Activated CD4-positive, alpha-beta T cell treated with anti-CD3 and anti-CD28 coated beads for 36 hours (primary cell): ENCODE measurements at regions of chr12 and their contacts with region 1.

Region 1: GRCh38 chr12:3947781-3948180 is 74.6 kb upstream of the PARP11 start:
- DNase-seq: no peak
- ATAC-seq: peak; percentile 52
- H3K4me3 Mint-ChIP-seq: peak overlapping the region; percentile 25
- H3K27ac Mint-ChIP-seq: peak overlapping the region; percentile 84
- H3K4me1 Mint-ChIP-seq: peaks cover 60% of the 10 kb centered on the region
- H3K27me3 Mint-ChIP-seq: no peaks in the 10 kb centered on the region

Region 2: GRCh38 chr12:3905664-3906063 is 42.1 kb before region 1 on chr12:
- CTCF ChIA-PET with region 1: no interaction called
- POLR2A ChIA-PET with region 1: no interaction called
- intact Hi-C with region 1: loop called in 1 of 2 experiments (anchors 5 kb)
- DNase-seq: peak; percentile 25
- ATAC-seq: peak; percentile 66
- H3K4me3 Mint-ChIP-seq: peak overlapping the region; percentile 66
- H3K27ac Mint-ChIP-seq: peak overlapping the region; percentile 81
- H3K4me1 Mint-ChIP-seq: peaks cover 47% of the 10 kb centered on the region
- H3K27me3 Mint-ChIP-seq: no peaks in the 10 kb centered on the region

Region 3: DNA sequence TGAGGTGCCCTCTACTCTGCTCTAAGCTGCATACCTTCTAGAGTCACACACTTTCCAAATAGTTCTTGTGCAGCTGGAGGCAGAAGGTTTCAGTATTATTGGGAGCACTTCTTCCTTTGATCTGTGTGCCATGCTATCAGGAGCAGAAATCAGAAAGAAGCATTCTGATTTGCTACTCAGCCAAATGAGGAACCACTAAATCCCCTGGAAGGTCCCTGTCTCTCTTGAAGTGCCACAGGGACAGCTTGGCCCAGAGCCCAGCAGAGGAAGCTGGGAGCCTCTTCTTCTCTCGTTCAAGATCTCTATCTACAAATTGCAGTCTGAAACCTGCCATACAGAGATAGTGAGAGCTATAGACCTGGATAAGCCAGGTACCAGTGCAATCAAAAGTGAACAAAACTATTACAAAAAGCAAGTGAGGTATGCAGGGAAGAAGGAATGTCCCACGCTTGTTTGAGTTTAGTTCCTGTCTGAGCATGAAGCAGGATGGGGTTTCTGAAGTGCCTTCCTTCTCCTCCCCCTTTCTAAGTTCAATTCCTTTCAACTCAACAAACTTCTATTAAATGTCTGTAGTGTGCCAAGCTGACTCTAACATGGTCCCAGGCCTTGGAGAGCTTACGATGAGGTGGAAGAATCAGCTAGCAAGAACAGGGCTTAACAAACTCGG is 26.3 kb after region 1 on chr12:
- CTCF ChIA-PET with region 1: interaction called, 5 read pairs
- POLR2A ChIA-PET with region 1: no interaction called
- intact Hi-C with region 1: loop called in 1 of 2 experiments (anchors 2 kb)
- DNase-seq: peak; percentile 40
- ATAC-seq: peak; percentile 69
- H3K4me3 Mint-ChIP-seq: peak overlapping the region; percentile 25
- H3K27ac Mint-ChIP-seq: peak overlapping the region; percentile 76
- H3K4me1 Mint-ChIP-seq: peaks cover 66% of the 10 kb centered on the region
- H3K27me3 Mint-ChIP-seq: no peaks in the 10 kb centered on the region

Region 4: DNA sequence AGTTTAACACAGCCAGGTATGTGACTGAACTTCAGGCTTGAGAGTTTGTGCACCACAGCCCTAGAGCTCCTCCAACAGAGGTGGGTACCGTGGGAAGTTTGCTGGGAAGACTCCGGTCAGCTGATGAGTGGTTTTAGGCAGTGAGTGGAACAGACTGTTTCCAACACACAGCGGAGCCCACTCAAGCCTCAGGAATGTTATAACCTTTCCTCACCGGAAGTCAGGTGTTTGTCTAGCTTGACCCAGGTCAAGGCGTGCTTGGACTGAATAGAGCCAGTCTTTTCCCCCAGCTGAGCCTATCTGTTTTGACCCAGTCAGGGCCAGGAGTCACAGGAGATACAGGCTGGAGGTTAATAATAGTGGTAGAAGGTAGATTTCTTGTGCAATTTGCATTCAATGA is 63.8 kb after region 1 on chr12:
- CTCF ChIA-PET with region 1: no interaction called
- POLR2A ChIA-PET with region 1: no interaction called
- intact Hi-C with region 1: no loop called
- DNase-seq: no peak
- ATAC-seq: no peak
- H3K4me3 Mint-ChIP-seq: no peak overlapping the region
- H3K27ac Mint-ChIP-seq: no peak overlapping the region
- H3K4me1 Mint-ChIP-seq: no peaks in the 10 kb centered on the region
- H3K27me3 Mint-ChIP-seq: no peaks in the 10 kb centered on the region

Region 5: DNA sequence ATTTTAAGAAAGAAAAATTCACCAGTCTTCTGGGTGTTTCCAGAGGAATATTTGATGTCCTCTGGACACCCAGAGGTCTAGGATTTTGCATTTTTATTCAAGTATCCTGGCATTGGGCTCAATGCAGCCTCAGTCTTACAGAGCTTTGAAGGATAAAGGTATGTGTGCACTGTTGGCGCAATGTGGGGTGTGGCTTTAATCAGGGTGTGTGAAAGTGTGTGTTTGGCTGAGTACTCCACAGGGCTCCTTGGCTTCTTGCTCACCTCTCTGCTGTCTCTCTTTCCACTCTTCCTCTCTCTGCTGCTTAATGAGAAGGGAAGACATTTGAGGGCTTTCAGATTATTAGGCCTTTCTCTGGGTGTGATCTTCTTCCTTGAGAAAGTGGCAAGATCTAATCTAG is 132.4 kb after region 1 on chr12:
- CTCF ChIA-PET with region 1: no interaction called
- POLR2A ChIA-PET with region 1: no interaction called
- intact Hi-C with region 1: no loop called
- DNase-seq: no peak
- ATAC-seq: no peak
- H3K4me3 Mint-ChIP-seq: no peak overlapping the region
- H3K27ac Mint-ChIP-seq: no peak overlapping the region
- H3K4me1 Mint-ChIP-seq: no peaks in the 10 kb centered on the region
- H3K27me3 Mint-ChIP-seq: peaks cover 2% of the 10 kb centered on the region